Gastrocnemius medialis (tissue), 4 donors: ENCODE measurements at regions of chr4 and their contacts with region 1.

Region 1: GRCh38 chr4:123418351-123418931 is 21.8 kb downstream of the SPRY1 start:
- DNase-seq: peak; percentile 22 to 48
- ATAC-seq: peak; percentile 92 to 96
- H3K4me3 ChIP-seq: peak overlapping the region in 1 of 4 donors; percentile 20
- H3K27ac ChIP-seq: peak overlapping the region; percentile 56 to 79 (median 78)
- H3K4me1 ChIP-seq: peaks cover 23 to 25% of the 10 kb centered on the region in 2 donors
- H3K27me3 ChIP-seq: no peaks in the 10 kb centered on the region
- CTCF ChIP-seq: no peak
- POLR2A ChIP-seq: no peak

Region 2: DNA sequence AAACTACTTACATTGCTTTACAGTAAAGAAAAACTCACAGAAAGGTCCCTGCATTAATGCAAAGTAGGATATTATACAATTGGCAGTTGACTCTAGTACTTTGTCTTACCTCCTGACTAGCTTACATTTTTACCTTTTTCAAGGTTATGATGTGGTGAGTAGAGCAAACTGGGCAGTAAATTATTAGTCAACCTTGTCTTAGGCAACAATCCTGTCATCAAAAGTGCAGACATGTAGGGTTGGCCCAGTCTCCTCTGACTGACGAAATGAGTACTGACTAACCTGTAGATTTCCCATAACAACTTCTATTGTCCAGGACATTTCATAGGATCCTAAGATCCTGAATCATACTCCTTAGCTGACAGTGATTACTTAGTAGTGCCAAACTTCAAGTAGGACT is 354.1 kb before region 1 on chr4:
- in situ Hi-C with region 1: no loop called
- intact Hi-C with region 1: no loop called
- DNase-seq: no peak
- ATAC-seq: no peak
- H3K4me3 ChIP-seq: no peak overlapping the region
- H3K27ac ChIP-seq: no peak overlapping the region
- H3K4me1 ChIP-seq: no peaks in the 10 kb centered on the region
- H3K27me3 ChIP-seq: no peaks in the 10 kb centered on the region
- CTCF ChIP-seq: no peak
- POLR2A ChIP-seq: no peak

Region 3: DNA sequence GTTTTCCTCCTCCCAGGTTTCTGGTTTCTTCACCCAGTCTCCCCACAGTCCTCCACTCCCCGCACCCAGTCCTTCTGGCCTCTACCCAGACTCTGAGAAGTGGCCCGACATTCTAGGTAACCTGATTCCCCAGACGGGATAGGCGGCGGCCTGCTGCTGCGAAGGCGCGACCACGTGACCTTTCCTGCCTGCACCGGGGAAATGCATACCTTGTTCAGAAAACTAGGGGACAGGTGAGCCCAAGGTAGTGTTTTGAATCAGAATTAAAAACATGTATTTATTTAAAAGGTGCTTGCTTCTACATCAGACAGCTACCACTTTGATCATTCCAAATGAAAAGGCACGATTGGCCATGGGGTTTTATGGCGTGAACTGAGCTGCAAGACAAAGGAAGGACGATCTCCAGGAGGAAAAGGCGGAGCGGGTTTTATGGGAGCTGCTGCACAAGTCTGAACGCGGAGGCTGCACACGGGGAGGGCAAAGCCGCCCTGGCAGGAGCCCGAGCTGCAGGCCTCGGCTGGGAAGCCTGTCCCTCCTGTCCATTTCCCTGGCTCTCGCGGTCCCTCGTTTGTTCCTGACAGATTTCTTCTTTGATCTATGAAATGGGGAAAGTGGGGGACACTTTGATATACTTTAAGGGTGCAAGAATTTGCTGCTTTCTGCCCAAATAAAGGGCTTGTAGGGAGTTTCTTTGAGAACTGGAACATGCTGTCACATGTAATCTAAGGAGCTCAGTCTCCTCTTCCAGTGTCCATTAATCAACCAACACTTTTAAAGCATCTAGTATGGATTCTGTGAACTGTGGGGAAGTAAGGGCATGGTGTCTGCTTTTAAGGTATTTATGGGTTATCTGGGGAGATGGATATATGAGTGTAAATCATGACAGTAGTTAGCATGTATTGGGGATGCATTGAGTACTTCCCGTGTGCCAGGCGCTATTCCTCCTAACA is 129.1 kb after region 1 on chr4:
- in situ Hi-C with region 1: no loop called
- intact Hi-C with region 1: no loop called
- DNase-seq: no peak
- ATAC-seq: no peak
- H3K4me3 ChIP-seq: no peak overlapping the region
- H3K27ac ChIP-seq: no peak overlapping the region
- H3K4me1 ChIP-seq: no peaks in the 10 kb centered on the region
- H3K27me3 ChIP-seq: no peaks in the 10 kb centered on the region
- CTCF ChIP-seq: no peak
- POLR2A ChIP-seq: no peak

Region 4: DNA sequence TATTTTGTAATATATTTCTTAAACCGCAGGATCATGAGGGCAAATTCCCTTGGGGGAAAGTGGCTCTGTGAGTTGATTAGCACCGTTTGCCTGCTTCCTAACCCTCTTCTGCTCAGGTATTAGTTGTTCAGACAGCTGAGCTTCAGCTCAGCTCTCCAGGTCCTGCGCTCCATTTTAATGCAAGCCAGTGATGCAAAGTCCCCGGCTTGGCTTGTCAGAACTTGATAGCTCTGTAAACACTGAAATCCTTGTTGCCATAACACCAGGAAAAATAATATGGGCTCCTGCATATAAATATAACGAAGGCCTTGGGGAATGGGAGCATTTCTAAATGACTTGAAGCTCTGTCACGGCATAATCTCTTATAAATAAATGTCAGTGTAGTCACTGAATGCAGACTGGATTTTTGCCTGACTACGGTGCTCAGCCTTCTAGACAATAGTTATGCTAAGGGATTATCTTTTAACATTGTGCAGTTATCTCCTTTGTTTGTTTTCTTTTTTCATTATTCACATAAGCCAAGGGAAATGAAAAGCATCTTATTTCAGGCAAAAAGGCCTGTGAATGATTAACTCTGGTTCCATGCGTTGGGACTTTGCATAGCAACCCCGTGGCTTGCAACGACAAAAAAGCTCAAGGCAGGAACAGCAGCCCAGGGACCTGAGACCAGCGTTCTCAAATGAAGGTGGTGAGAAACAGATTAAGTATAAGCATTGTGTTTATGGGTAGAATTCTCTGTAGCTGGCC is 231.4 kb after region 1 on chr4:
- in situ Hi-C with region 1: loop called in 1 of 4 experiments (anchors 25 kb)
- intact Hi-C with region 1: no loop called
- DNase-seq: peak; percentile 29 to 49
- ATAC-seq: peak; percentile 85 to 96
- H3K4me3 ChIP-seq: peak overlapping the region; percentile 19 to 35 (median 30)
- H3K27ac ChIP-seq: peak overlapping the region; percentile 77 to 81 (median 78)
- H3K4me1 ChIP-seq: peaks cover 32 to 41% of the 10 kb centered on the region in 2 donors
- H3K27me3 ChIP-seq: no peaks in the 10 kb centered on the region
- CTCF ChIP-seq: no peak
- POLR2A ChIP-seq: peak in 1 of 2 donors; percentile 23

Region 5: GRCh38 chr4:123856689-123857545 is 438.5 kb after region 1 on chr4:
- in situ Hi-C with region 1: loop called in 1 of 4 experiments (anchors 25 kb)
- intact Hi-C with region 1: no loop called
- DNase-seq: peak; percentile 12 to 31
- ATAC-seq: peak; percentile 86 to 88
- H3K4me3 ChIP-seq: peak overlapping the region; percentile 29 to 46 (median 42)
- H3K27ac ChIP-seq: peak overlapping the region; percentile 67 to 74 (median 74)
- H3K4me1 ChIP-seq: peaks cover 27 to 35% of the 10 kb centered on the region in 2 donors
- H3K27me3 ChIP-seq: no peaks in the 10 kb centered on the region
- CTCF ChIP-seq: peak in 2 of 5 experiments; percentile 12 to 40
- POLR2A ChIP-seq: no peak